Testis (tissue), 5 donors: ENCODE measurements at regions of chr3 and their contacts with region 1.

Region 1: GRCh38 chr3:168051531-168052471 is 43.9 kb downstream of the GOLIM4 start:
- DNase-seq: no peak
- H3K4me3 ChIP-seq: no peak overlapping the region
- H3K27ac ChIP-seq: no peak overlapping the region
- H3K4me1 ChIP-seq: no peaks in the 10 kb centered on the region
- H3K27me3 ChIP-seq: no peaks in the 10 kb centered on the region
- CTCF ChIP-seq: no peak
- POLR2A ChIP-seq: no peak

Region 2: DNA sequence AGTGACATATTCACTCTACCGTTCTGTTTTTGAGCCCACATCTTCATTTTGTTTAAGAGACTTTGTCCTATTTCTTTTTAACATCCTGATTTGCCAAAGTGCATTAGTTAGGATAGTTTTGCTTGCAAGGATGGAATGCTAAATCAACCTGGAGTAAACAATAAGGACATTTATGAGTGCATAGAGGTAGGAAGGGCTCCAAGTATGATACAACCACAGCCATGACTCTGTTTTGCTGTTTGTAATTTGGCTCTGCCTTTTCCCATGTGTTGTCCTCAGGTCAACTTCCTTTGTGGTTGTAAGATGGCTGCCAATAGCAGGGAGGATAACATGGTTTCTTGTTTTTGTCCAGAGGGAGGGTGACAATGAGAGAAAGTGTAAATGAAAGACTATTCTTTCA is 110.4 kb after region 1 on chr3:
- intact Hi-C with region 1: loop called (anchors 5 kb)
- DNase-seq: no peak
- H3K4me3 ChIP-seq: no peak overlapping the region
- H3K27ac ChIP-seq: no peak overlapping the region
- H3K4me1 ChIP-seq: no peaks in the 10 kb centered on the region
- H3K27me3 ChIP-seq: no peaks in the 10 kb centered on the region
- CTCF ChIP-seq: no peak
- POLR2A ChIP-seq: no peak